ENCODE measurements at regions of chr2 and their contacts with region 1.

Region 1: DNA sequence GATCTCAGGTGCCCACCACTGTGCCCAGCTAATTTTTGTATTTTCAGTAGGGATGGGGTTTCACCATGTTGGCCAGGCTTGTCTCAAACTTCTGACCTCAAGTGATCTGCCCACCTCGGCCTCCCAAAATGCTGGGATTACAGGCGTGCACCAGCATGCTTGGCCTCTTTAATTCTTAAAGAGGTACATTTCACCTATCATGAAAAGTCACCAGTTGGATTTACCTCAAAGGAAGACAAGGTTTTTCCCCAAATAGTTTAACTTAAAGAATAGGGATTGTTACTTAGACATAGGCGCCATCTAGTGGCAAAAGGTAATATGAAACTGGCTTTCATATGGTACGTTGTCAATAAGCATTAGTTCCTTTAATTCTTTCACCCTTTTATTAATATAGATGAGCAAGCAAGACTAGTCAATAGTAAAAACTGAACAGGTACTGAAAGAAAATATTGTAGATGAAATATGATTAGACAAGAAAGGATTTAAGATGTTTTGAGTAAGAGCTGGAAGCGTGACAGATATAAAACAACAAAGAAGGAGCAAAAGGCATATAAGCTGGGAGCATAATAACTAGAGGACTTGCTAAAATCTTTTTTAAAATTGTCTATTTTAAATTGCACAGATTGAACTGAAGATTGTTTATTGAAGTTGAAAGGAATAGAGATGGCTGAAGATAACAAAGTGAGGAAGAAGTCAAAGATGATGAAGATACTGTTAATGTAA is 35.0 kb upstream of the PSMD14 start:
- DNase-seq: peak; percentile 40
- H3K4me3 Mint-ChIP-seq: no peak overlapping the region
- H3K27ac Mint-ChIP-seq: no peak overlapping the region
- H3K4me1 Mint-ChIP-seq: no peaks in the 10 kb centered on the region
- H3K27me3 Mint-ChIP-seq: no peaks in the 10 kb centered on the region
- CTCF ChIP-seq: peak; percentile 56

Region 2: GRCh38 chr2:161223139-161223732 is 50.0 kb before region 1 on chr2:
- CTCF ChIA-PET with region 1: interaction called, 4 read pairs
- intact Hi-C with region 1: loop called (anchors 2 kb)
- DNase-seq: peak; percentile 12
- H3K4me3 Mint-ChIP-seq: no peak overlapping the region
- H3K27ac Mint-ChIP-seq: no peak overlapping the region
- H3K4me1 Mint-ChIP-seq: no peaks in the 10 kb centered on the region
- H3K27me3 Mint-ChIP-seq: no peaks in the 10 kb centered on the region
- CTCF ChIP-seq: peak; percentile 40

Region 3: GRCh38 chr2:161250864-161251436 is 22.2 kb before region 1 on chr2:
- CTCF ChIA-PET with region 1: no interaction called
- intact Hi-C with region 1: loop called (anchors 1 kb)
- DNase-seq: peak; percentile 58
- H3K4me3 Mint-ChIP-seq: no peak overlapping the region
- H3K27ac Mint-ChIP-seq: no peak overlapping the region
- H3K4me1 Mint-ChIP-seq: no peaks in the 10 kb centered on the region
- H3K27me3 Mint-ChIP-seq: peaks cover 10% of the 10 kb centered on the region
- CTCF ChIP-seq: peak; percentile 31

Region 4: GRCh38 chr2:161308178-161308955 is 35.2 kb after region 1 on chr2 and contains the start of gene PSMD14:
- CTCF ChIA-PET with region 1: no interaction called
- intact Hi-C with region 1: no loop called
- DNase-seq: peak; percentile 92
- H3K4me3 Mint-ChIP-seq: peak within 1 kb of the TSS; percentile 95
- H3K27ac Mint-ChIP-seq: peak within 1 kb of the TSS; percentile 89
- H3K4me1 Mint-ChIP-seq: peaks cover 13% of the 10 kb centered on the region
- H3K27me3 Mint-ChIP-seq: no peaks in the 10 kb centered on the region
- CTCF ChIP-seq: no peak
- total RNA-seq, gene PSMD14: 91.4 and 97.4 TPM in 2 replicates

Measured in Calu3 (cell line).